ENCODE measurements at regions of chr15 and their contacts with region 1.

Region 1: DNA sequence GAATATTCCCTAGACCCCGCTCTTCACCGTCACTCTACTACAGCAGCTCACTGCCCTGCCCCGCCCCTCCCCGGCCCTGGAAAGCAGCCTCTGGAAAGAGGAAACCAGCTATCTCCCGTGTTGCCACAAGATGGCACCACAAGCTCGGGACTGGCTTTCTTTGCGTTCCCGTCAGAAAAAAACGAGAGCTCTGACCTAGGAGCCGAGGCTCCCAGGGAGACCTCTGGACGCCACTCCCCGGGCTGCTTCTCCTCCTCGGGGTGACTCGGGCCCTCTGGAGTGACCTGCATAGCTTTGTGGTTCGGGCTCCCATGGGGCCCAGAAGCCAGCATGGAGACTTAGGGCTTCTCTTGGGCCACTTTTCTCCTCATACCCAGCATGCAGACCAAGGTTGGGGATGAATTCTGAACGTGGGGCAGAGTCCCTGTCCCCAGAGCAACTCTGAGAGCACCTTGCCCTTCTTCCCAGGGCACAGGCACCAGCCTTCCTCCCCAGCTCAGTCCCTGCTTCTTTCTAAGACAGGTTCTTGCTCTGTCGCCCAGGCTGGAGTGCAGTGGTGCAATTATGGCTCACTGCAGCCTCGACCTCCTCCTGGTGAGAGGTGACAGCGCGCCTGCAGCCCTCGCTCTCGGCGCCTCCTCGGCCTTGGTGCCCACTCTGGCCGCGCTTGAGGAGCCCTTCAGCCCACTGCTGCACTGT is 19.0 kb downstream of the STOML1 start:
- DNase-seq: peak; percentile 89
- H3K4me3 Mint-ChIP-seq: peak overlapping the region; percentile 44
- H3K27ac Mint-ChIP-seq: no peak overlapping the region
- H3K4me1 Mint-ChIP-seq: peaks cover 14% of the 10 kb centered on the region
- H3K27me3 Mint-ChIP-seq: peaks cover 18% of the 10 kb centered on the region
- CTCF ChIP-seq: peak; percentile 78

Region 2: GRCh38 chr15:73921254-73921925 is 51.7 kb before region 1 on chr15:
- CTCF ChIA-PET with region 1: no interaction called
- intact Hi-C with region 1: no loop called
- DNase-seq: no peak
- H3K4me3 Mint-ChIP-seq: no peak overlapping the region
- H3K27ac Mint-ChIP-seq: no peak overlapping the region
- H3K4me1 Mint-ChIP-seq: peaks cover 17% of the 10 kb centered on the region
- H3K27me3 Mint-ChIP-seq: peaks cover 25% of the 10 kb centered on the region
- CTCF ChIP-seq: no peak

Region 3: DNA sequence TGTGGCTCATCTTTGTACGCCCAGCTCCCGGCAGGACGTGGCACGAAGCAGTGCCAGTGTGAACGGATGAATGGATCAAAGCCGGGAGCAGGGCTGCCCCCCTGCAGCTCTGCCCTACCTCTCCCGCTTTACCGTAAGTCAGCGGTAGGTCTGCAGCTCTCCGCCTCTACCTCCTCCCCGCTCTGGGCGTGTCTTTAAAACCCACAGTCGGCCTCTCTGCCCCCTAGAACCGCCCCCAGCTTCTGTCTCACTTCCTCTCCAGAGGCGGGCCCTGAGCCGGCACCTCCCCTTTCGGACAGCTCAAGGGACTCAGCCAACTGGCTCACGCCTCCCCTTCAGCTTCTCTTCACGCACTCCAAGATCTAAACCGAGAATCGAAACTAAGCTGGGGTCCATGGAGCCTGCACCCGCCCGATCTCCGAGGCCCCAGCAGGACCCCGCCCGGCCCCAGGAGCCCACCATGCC is 21.3 kb after region 1 on chr15 and contains the start of gene PML:
- CTCF ChIA-PET with region 1: interaction called, 25 read pairs
- intact Hi-C with region 1: no loop called
- DNase-seq: peak; percentile 97
- H3K4me3 Mint-ChIP-seq: peak within 1 kb of the TSS; percentile 88
- H3K27ac Mint-ChIP-seq: peak within 1 kb of the TSS; percentile 34
- H3K4me1 Mint-ChIP-seq: peaks cover 74% of the 10 kb centered on the region
- H3K27me3 Mint-ChIP-seq: no peaks in the 10 kb centered on the region
- CTCF ChIP-seq: no peak
- total RNA-seq, gene PML: 120 and 153 TPM in 2 replicates

Region 4: GRCh38 chr15:74025436-74025835 is 52.3 kb after region 1 on chr15:
- CTCF ChIA-PET with region 1: interaction called, 10 read pairs
- intact Hi-C with region 1: no loop called
- DNase-seq: no peak
- H3K4me3 Mint-ChIP-seq: no peak overlapping the region
- H3K27ac Mint-ChIP-seq: no peak overlapping the region
- H3K4me1 Mint-ChIP-seq: no peaks in the 10 kb centered on the region
- H3K27me3 Mint-ChIP-seq: no peaks in the 10 kb centered on the region
- CTCF ChIP-seq: no peak

Region 5: GRCh38 chr15:74047781-74048180 is 74.6 kb after region 1 on chr15:
- CTCF ChIA-PET with region 1: interaction called, 18 read pairs
- intact Hi-C with region 1: loop called (anchors 5 kb)
- DNase-seq: no peak
- H3K4me3 Mint-ChIP-seq: no peak overlapping the region
- H3K27ac Mint-ChIP-seq: peak overlapping the region; percentile 15
- H3K4me1 Mint-ChIP-seq: peaks cover 18% of the 10 kb centered on the region
- H3K27me3 Mint-ChIP-seq: no peaks in the 10 kb centered on the region
- CTCF ChIP-seq: no peak

Region 6: DNA sequence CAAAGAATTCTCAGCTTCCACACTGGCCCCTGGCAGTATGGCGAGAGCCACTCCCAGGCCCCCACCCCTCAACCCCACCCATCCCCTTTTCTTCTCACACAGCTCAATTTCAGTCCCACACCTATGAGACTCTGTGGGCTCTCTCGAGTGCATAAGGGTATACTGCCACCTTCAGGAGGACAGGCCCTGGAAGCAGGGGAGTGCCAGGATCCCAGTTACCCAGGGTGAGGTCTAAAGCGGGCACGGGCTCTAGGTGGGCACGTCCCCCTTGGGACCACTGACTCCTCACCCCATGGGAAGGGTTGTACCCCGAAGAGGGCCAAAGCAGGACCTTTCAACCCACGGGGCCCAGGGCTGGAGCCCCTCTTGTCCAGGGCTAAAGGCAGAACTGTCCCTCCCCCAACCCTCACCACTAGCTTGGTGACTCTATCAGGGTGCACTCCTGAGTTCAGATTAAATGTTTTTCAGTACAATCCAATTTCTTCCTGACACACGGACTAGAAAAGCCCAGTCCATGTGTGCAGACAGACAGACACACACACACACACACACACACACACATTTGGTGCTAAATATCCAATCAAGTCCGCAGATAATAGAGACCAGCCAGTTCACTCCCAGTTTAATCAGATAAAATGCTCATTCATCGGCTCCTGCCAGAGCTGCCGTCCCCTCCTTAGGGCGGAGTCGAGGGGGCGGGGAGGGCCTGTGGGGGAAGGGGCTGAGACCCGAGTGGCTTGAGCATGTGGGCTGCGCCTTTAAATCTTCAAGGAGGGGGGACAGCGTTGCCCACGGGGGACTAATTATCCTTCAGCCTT is 334.9 kb after region 1 on chr15:
- CTCF ChIA-PET with region 1: interaction called, 12 read pairs
- intact Hi-C with region 1: no loop called
- DNase-seq: peak; percentile 81
- H3K4me3 Mint-ChIP-seq: no peak overlapping the region
- H3K27ac Mint-ChIP-seq: no peak overlapping the region
- H3K4me1 Mint-ChIP-seq: peaks cover 9% of the 10 kb centered on the region
- H3K27me3 Mint-ChIP-seq: peaks cover 100% of the 10 kb centered on the region
- CTCF ChIP-seq: peak; percentile 71

Measured in Calu3 (cell line).